Sigmoid colon (tissue), 7 donors: ENCODE measurements at regions of chrX and their contacts with region 1.

Region 1: GRCh38 chrX:16870095-16870860 is at the start of gene RBBP7:
- DNase-seq: peak; percentile 97
- H3K4me3 ChIP-seq: peak within 1 kb of the TSS; percentile 53 to 74 (median 68)
- H3K27ac ChIP-seq: peak within 1 kb of the TSS; percentile 90 to 94 (median 90)
- H3K4me1 ChIP-seq: peaks cover 0 to 49% (median 27%) of the 10 kb centered on the region in 4 donors
- H3K27me3 ChIP-seq: no peaks in the 10 kb centered on the region
- CTCF ChIP-seq: no peak
- EP300 ChIP-seq: no peak
- POLR2A ChIP-seq: peak; percentile 85 to 92
- total RNA-seq, gene RBBP7: 99.8 to 130 (median 118) TPM

Region 2: GRCh38 chrX:16826207-16826606 is 44.1 kb before region 1 on chrX:
- intact Hi-C with region 1: loop called (anchors 5 kb)
- DNase-seq: no peak
- H3K4me3 ChIP-seq: no peak overlapping the region
- H3K27ac ChIP-seq: peak overlapping the region in 3 of 4 donors; percentile 17 to 84 (median 75)
- H3K4me1 ChIP-seq: peaks cover 0 to 24% (median 3%) of the 10 kb centered on the region in 4 donors
- H3K27me3 ChIP-seq: no peaks in the 10 kb centered on the region
- CTCF ChIP-seq: peak in 3 of 4 experiments; percentile 19 to 29 (median 27)
- EP300 ChIP-seq: no peak
- POLR2A ChIP-seq: no peak

Region 3: GRCh38 chrX:16845686-16846085 is 24.6 kb before region 1 on chrX:
- intact Hi-C with region 1: loop called (anchors 2 kb)
- DNase-seq: no peak
- H3K4me3 ChIP-seq: no peak overlapping the region
- H3K27ac ChIP-seq: no peak overlapping the region
- H3K4me1 ChIP-seq: peaks cover 0 to 22% (median 0%) of the 10 kb centered on the region in 4 donors
- H3K27me3 ChIP-seq: no peaks in the 10 kb centered on the region
- CTCF ChIP-seq: no peak
- EP300 ChIP-seq: no peak
- POLR2A ChIP-seq: no peak